ENCODE measurements at regions of chr9 and their contacts with region 1.

Region 1: DNA sequence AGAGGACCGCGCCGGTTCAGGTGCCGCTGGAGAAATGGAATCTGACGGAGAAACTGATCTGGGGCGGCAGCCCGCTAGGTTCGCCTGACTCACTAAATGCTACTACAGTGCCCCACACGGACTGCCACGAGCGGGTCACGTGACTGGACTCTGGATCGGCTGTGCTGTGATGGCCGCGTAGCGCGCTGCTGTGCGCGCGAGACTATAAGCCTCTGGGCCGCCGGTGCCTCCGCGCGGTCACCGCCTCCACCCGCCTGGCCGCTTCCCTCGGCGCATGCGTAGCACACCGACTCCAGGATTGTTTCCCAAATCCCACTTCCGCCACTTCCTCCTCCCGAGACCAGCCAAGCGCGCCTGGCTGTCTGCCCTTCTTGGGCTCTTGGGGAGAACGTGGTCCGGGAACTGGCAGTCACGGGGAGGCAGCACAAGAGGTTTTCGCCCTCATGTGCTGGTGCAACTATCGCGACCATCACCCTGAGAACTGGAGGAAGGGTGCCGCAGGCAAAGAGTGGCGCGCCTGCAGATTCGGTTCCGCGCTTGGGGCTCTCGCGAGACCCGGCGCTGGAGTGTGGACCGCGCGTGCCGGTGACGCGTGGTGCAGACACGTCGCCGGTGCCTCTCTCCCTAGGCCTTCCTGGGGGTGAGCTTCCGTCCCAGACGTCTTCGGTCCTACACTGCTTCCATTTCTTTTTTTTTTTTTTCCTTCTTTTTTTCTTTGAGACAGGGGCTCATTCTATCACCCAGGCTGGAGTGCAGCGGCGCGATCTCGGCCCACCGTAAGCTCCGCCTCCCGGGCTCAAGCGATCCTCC is 35.8 kb upstream of the GLDC start:
- DNase-seq: peak; percentile 97
- H3K4me3 ChIP-seq: peak overlapping the region; percentile 60
- H3K27ac ChIP-seq: peak overlapping the region; percentile 96
- H3K4me1 ChIP-seq: no peaks in the 10 kb centered on the region
- H3K27me3 ChIP-seq: no peaks in the 10 kb centered on the region
- CTCF ChIP-seq: 0 out of 2 replicates have a peak, but pooled peaks have one; percentile 9

Region 2: GRCh38 chr9:6008169-6008979 is 673.0 kb before region 1 on chr9:
- CTCF ChIA-PET with region 1: no interaction called
- POLR2A ChIA-PET with region 1: interaction called, 10 read pairs
- intact Hi-C with region 1: no loop called
- DNase-seq: peak; percentile 98
- H3K4me3 ChIP-seq: peak overlapping the region; percentile 86
- H3K27ac ChIP-seq: peak overlapping the region; percentile 82
- H3K4me1 ChIP-seq: peaks cover 15% of the 10 kb centered on the region
- H3K27me3 ChIP-seq: no peaks in the 10 kb centered on the region
- CTCF ChIP-seq: no peak

Region 3: DNA sequence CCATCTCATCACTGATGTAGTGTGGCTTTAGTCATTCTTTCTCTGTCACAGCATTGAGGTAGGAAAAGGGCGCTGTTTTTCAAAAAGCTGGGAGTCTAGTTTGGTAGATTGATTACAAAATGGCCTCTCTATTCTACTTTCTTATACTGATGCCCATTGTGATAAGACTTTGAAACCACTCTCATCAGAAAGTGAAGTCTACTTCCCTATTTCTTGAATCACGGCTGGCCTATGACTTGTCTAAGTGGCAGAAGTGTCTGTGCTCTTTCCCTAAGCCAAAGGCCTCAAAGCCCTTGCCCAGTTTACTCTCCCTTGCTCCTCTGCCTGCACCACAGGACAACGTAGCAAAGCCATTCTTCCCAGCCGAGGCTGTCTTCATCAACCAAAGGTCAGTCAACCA is 548.7 kb before region 1 on chr9:
- CTCF ChIA-PET with region 1: no interaction called
- POLR2A ChIA-PET with region 1: no interaction called
- intact Hi-C with region 1: no loop called
- DNase-seq: no peak
- H3K4me3 ChIP-seq: no peak overlapping the region
- H3K27ac ChIP-seq: no peak overlapping the region
- H3K4me1 ChIP-seq: no peaks in the 10 kb centered on the region
- H3K27me3 ChIP-seq: no peaks in the 10 kb centered on the region
- CTCF ChIP-seq: no peak

Region 4: DNA sequence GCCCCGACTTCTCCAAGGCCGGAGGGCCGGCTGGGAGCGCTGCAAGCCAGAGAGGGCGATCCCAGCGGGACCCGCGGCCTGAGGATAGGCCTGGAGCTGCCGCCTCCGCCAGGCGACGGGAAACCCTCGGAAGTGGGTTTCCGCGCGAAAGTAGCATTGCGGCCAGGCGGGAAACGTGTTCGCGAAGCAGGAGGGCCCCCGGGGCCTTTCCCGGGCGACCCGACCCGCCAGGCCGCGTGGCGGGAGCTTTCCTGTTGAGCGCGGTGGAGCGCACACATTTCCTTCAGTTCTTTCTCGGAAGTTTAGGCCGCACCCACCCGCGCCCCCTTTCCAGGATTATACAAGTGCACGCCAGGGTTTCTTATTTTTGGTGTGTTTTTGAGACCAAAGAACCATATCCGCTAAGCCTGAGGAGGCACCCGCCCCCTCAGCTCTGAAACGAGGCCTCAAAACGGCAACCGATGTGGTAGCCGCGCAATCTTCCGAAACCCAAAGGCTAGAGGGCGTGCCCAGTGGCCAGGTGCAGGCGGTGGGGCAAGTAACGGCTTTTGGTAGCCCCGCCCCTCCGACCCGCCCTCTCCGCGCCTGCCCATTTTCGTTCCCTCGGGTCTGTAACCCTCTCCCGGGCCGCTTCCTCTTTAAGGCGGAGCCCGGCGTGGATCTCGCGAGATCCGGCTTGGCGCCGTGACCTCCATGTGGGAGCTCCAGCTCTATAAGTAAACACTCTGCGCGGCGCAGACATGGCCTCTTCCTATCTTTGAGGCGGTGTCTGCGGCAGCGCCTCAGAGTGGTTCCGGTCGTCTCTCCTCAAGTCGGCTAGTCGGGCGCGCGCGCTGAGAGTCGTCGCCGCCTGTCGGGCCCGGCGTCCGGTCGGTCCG is 268.6 kb before region 1 on chr9 and contains the start of gene UHRF2:
- CTCF ChIA-PET with region 1: no interaction called
- POLR2A ChIA-PET with region 1: no interaction called
- intact Hi-C with region 1: loop called (anchors 5 kb)
- DNase-seq: peak; percentile 99
- H3K4me3 ChIP-seq: peak within 1 kb of the TSS; percentile 97
- H3K27ac ChIP-seq: peak within 1 kb of the TSS; percentile 92
- H3K4me1 ChIP-seq: peaks cover 5% of the 10 kb centered on the region
- H3K27me3 ChIP-seq: peaks cover 32% of the 10 kb centered on the region
- CTCF ChIP-seq: no peak
- total RNA-seq, gene UHRF2: 52.7 and 53.0 TPM in 2 replicates

Region 5: GRCh38 chr9:6703898-6704639 is 22.7 kb after region 1 on chr9:
- CTCF ChIA-PET with region 1: no interaction called
- POLR2A ChIA-PET with region 1: interaction called, 14 read pairs
- intact Hi-C with region 1: no loop called
- DNase-seq: peak; percentile 79
- H3K4me3 ChIP-seq: peak overlapping the region; percentile 54
- H3K27ac ChIP-seq: no peak overlapping the region
- H3K4me1 ChIP-seq: no peaks in the 10 kb centered on the region
- H3K27me3 ChIP-seq: no peaks in the 10 kb centered on the region
- CTCF ChIP-seq: no peak

Region 6: GRCh38 chr9:6757456-6758247 is 76.3 kb after region 1 on chr9 and contains the start of gene KDM4C:
- CTCF ChIA-PET with region 1: no interaction called
- POLR2A ChIA-PET with region 1: no interaction called
- intact Hi-C with region 1: loop called (anchors 2 kb)
- DNase-seq: peak; percentile 97
- H3K4me3 ChIP-seq: peak within 1 kb of the TSS; percentile 89
- H3K27ac ChIP-seq: peak within 1 kb of the TSS; percentile 87
- H3K4me1 ChIP-seq: peaks cover 3% of the 10 kb centered on the region
- H3K27me3 ChIP-seq: no peaks in the 10 kb centered on the region
- CTCF ChIP-seq: no peak
- total RNA-seq, gene KDM4C: 4.8 and 6.3 TPM in 2 replicates

Measured in A673 (cell line).